Right ventricle myocardium inferior (tissue), 1 donor: ENCODE measurements at regions of chr2 and their contacts with region 1.

Region 1: GRCh38 chr2:39379643-39380524 is 57.2 kb downstream of the MAP4K3 start:
- DNase-seq: no peak
- ATAC-seq: peak; percentile 78

Region 2: DNA sequence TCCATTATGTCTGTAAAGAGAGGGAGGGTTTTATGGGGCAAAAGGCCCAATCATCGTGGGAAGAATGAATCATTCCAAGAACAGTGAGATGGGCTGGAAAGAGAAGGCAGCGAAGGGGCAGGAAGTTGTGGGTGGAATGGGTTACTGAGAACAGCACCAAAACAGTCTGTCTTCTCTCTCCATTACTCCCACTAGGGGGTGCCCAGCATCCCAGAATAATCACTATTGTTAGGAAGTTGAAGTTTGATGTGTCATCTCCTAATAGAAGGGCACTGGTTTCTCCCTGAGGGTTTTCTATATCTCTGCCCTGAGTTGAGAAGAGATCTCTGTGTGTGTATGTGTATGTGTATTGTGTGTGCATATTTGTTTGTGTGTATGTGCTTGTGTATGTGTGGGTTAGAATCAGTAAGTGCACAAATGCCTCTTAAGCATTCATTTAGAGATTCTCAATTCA is 133.8 kb after region 1 on chr2:
- intact Hi-C with region 1: loop called (anchors 5 kb)
- DNase-seq: no peak
- ATAC-seq: peak; percentile 46

Region 3: DNA sequence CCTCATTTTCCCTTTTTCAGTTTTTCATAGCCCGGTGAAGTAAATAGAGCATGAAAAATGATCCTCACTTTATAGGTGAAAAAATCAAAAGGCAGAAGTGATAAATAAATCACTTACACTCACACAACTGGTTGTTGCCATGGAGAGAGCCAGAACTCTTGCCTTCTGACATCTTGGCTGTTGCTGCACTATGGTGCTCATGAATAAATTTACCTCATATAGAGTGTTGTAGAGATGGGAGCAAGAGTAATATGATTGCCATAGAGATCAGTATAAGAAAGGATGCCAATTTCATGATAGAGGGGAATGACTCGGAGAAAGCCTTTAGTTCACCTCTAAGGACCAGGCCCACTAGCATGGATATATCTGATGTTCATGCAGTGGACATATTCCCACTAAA is 203.3 kb after region 1 on chr2:
- intact Hi-C with region 1: no loop called
- DNase-seq: no peak
- ATAC-seq: no peak

Region 4: DNA sequence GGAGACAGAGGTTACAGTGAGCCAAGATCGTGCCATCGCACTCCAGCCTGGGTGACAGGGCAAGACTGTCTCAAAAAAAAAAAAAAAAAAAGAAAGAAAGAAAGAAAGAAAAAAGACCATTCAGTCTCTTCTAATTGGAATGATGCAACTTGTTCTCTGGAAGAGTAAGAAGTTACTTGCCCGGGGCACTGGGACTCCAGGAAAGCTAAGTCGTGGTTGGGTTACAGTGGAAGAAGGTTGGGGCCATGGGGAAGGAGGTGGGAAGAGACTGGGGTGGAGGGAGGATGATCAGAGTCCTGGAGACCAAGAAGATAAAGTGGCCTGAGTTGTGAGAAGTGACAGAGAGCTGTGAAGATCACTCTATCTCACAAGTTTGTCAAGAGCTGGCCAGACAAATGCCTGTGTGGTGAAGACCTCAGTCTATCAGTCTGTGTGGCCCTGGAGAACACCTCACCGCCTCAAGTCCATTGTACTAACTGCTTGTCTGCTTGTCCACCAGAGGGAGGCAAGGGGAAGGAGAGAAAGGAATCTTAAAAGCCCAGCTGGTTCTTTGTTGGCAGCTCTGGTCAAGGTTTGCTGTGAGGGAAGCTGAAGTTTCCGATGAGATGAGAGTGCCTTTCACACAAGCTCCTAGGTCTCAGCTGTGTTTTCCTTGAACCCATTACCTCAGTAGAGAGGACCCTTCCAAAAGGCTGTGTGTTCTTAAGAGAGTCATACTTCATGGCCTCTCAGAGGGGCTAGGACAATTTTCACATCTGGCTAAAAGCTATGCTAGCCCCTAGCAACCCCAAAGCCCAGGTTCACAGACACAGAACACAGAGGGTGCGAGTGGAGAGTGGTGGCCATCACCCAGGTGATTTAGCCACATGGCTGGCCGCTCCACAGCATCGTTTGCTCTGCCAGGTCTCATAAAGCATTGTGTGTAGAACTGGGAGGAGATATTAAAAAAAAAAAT is 213.8 kb after region 1 on chr2:
- intact Hi-C with region 1: loop called (anchors 10 kb)
- DNase-seq: no peak
- ATAC-seq: peak; percentile 73

Region 5: GRCh38 chr2:39696838-39697237 is 317.0 kb after region 1 on chr2:
- intact Hi-C with region 1: loop called (anchors 1 kb)
- DNase-seq: no peak
- ATAC-seq: peak; percentile 54